Activated naive CD4-positive, alpha-beta T cell treated with anti-CD3 and anti-CD28 coated beads, Interleukin-2, amount 10 ng/mL, durations not matched to agents 7 days and 5 days (primary cell): ENCODE measurements at regions of chr1 and their contacts with region 1.

Region 1: GRCh38 chr1:201361652-201362504 is 15.6 kb downstream of the TNNT2 start:
- DNase-seq: peak; percentile 43
- H3K4me3 Mint-ChIP-seq: no peak overlapping the region
- H3K27ac Mint-ChIP-seq: no peak overlapping the region
- H3K4me1 Mint-ChIP-seq: no peaks in the 10 kb centered on the region
- H3K27me3 Mint-ChIP-seq: peaks cover 23% of the 10 kb centered on the region

Region 2: GRCh38 chr1:201254625-201255506 is 107.0 kb before region 1 on chr1:
- CTCF ChIA-PET with region 1: interaction called, 44 read pairs
- DNase-seq: peak; percentile 70
- H3K4me3 Mint-ChIP-seq: no peak overlapping the region
- H3K27ac Mint-ChIP-seq: no peak overlapping the region
- H3K4me1 Mint-ChIP-seq: peaks cover 2% of the 10 kb centered on the region
- H3K27me3 Mint-ChIP-seq: no peaks in the 10 kb centered on the region

Region 3: DNA sequence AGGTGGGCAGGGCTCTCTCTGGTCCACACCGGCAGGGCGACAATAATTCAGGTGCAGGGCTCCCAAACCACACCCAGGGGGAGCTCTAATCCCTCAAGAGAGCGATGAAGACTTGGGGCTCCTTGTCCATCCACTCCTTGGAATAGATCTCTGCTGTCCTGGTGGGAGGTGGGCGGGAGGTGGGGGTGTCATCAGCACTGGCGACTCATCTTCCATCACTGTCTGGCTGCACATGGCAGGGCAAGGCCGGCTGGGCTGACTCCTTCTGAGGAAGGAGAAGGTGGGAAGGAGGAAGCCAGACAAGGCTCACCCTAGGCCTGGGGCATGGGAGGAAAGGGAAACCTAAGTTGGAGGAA is 13.7 kb before region 1 on chr1:
- CTCF ChIA-PET with region 1: interaction called, 28 read pairs
- DNase-seq: peak; percentile 48
- H3K4me3 Mint-ChIP-seq: no peak overlapping the region
- H3K27ac Mint-ChIP-seq: no peak overlapping the region
- H3K4me1 Mint-ChIP-seq: no peaks in the 10 kb centered on the region
- H3K27me3 Mint-ChIP-seq: peaks cover 43% of the 10 kb centered on the region